Posterior cingulate gyrus (tissue), 11 donors: ENCODE measurements at regions of chr7 and their contacts with region 1.

Region 1: DNA sequence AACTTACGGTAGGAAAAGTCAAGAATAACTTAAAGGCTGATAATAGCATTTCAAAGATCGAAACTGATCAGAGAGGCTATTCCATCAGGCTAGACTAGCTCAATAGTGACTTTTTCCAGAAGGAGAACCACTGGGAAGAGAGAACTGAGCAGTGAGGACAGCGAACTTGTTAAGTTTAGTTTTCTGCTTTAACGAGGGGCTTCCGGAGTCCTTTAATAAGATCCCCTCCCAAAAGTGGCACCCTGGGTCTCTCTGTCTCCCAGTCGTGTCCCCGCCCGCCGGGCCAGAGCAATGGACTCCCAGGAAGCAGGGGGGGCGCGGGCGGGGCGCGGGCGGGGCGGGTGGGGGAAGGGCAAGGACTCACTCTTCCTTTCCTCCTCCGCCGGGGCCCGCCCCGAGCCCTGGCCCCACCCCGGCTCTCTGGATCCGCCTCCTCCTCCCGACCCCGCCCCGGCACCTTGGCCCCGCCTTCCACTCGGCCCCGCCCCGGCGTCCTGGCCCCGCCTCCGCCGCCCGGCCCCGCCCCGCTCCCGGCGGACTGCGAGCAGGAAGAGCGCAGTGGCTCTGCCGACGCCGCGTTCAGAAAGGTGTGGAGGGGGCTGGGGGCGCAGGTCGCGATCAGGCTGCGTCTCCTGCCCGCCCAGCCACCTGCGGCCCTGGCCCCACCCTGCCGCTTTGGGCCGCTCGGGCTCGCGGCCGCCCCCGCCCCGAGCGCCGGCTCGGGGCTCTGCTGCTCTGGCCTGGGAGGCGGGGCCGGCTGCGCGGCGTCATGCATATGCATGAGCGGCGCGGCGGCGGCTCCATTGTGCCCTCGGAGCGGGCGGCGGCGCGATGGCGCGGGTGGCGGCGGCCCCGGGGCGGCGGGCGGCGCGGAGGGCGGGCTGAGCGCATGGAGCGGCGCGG is at the start of gene ZMIZ2:
- DNase-seq: peak; percentile 89 to 99 (median 94)

Region 2: DNA sequence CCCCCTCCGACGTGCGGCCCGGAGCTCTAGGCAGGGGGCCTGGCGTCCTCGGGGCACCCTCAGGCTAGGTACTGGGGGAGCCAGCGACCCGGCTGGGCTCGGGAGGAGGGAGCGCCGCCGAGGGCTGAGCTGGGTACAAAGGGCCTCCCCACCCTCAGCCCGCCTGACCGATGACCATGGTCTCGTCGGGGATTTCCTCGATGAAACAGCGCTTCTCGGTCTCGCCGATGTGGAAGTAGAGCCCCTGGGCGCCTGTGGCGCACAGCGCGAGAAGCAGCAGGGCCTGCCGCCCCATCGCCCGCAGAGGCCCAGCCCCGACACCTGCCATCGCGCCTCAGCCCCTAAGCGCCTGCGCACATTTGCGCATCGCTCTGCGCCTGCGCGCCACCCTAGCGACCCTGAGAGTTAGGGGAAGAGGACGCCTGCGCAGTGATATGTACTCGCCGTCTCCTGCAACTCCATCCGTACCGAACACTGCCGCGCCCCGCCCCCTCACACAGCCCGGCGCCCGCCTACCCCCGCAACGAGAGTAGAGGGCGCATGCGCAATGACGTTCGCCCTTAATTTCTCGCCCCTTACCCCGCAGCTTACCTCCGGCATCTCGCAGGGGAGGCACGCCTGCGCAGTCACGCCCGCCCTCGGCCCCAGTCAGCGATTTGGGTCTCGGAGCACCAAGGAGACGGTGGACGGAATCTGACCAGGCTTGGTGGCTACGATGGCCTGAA is 166.3 kb before region 1 on chr7 and contains the start of gene TMED4:
- intact Hi-C with region 1: loop called (anchors 5 kb)
- DNase-seq: peak; percentile 97 to 100 (median 99)

Region 3: GRCh38 chr7:44606450-44607254 is 141.6 kb before region 1 on chr7 and contains the start of gene OGDH:
- intact Hi-C with region 1: loop called (anchors 2 kb)
- DNase-seq: peak; percentile 98 to 100 (median 99)

Region 4: GRCh38 chr7:44665531-44666213 is 82.6 kb before region 1 on chr7:
- intact Hi-C with region 1: no loop called
- DNase-seq: no peak

Region 5: DNA sequence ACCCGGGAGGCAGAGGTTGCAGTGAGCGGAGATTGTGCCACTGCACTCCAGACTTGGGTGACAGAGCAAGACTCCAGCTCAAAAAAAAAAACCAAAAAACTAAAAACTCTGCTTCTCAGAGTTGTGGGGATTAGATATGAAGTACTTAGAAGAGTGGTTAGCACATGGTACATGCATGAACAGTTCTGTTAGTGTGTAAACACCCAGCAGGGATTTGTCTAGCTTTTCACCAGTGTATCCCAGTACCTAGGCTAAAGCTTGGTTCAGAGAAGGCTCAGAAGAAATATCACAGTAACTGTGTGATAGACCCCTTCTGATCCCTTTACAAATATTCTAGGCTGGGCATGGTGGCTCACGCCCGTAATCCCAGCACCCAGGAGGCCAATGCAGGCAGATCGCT is 57.7 kb after region 1 on chr7:
- intact Hi-C with region 1: no loop called
- DNase-seq: no peak